Ascending aorta (tissue), 2 donors: ENCODE measurements at regions of chr17 and their contacts with region 1.

Region 1: DNA sequence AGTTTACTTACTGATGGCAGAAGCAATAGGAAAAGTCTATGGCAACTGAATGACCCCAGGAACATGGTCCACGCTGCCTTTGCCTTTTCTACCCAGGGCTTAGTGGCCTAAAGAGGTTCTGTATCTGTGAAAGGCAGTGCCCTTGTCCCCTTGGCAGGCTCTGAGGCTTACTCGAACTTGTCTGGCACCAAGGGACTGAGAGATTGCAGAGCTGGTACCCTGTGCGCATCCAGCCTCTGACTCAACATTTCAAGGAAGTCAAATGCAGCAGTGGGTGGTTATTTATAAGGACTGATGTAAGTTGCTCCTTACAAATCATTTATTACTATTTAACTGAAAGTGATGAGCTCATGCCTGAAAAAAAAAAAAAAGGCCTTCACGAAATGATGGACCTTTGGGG is 299.9 kb upstream of the MYOCD start:
- DNase-seq: peak; percentile 72 to 93
- H3K4me3 ChIP-seq: no peak overlapping the region
- H3K27ac ChIP-seq: peak overlapping the region; percentile 87 to 94
- H3K4me1 ChIP-seq: peaks cover 0 to 33% of the 10 kb centered on the region in 2 donors
- H3K27me3 ChIP-seq: no peaks in the 10 kb centered on the region
- CTCF ChIP-seq: no peak

Region 2: DNA sequence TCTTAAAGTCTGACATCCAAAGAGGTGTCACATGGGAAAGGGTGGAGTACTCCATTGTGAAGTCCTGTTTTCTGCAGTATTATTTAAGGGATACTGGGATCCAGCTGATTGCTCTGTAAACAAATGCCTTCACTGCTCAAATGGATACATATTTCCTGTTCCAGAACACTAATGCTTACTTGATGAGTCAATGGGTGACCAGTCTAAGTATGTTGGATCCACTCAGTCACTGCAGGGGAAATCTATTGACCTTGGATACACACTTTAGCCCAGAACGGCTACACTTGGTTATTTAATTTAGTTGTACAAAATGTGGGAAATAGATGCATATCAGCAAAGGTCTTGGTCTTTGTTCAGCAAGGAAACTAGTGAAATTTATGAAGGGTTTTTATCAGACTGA is 83.7 kb before region 1 on chr17:
- intact Hi-C with region 1: loop called (anchors 5 kb)
- DNase-seq: no peak
- H3K4me3 ChIP-seq: no peak overlapping the region
- H3K27ac ChIP-seq: peak overlapping the region; percentile 76 to 77
- H3K4me1 ChIP-seq: peaks cover 0 to 15% of the 10 kb centered on the region in 2 donors
- H3K27me3 ChIP-seq: no peaks in the 10 kb centered on the region
- CTCF ChIP-seq: no peak

Region 3: GRCh38 chr17:12318571-12319266 is 47.1 kb before region 1 on chr17:
- intact Hi-C with region 1: loop called (anchors 1 kb)
- DNase-seq: peak in 1 of 2 donors; percentile 86
- H3K4me3 ChIP-seq: peak overlapping the region in 1 of 2 donors; percentile 18
- H3K27ac ChIP-seq: peak overlapping the region; percentile 89 to 90
- H3K4me1 ChIP-seq: peaks cover 0 to 22% of the 10 kb centered on the region in 2 donors
- H3K27me3 ChIP-seq: no peaks in the 10 kb centered on the region
- CTCF ChIP-seq: no peak

Region 4: GRCh38 chr17:12395733-12396354 is 30.0 kb after region 1 on chr17:
- intact Hi-C with region 1: no loop called
- DNase-seq: no peak
- H3K4me3 ChIP-seq: no peak overlapping the region
- H3K27ac ChIP-seq: no peak overlapping the region
- H3K4me1 ChIP-seq: peaks cover 0 to 12% of the 10 kb centered on the region in 2 donors
- H3K27me3 ChIP-seq: no peaks in the 10 kb centered on the region
- CTCF ChIP-seq: peak in 2 of 3 experiments; percentile 24 to 26

Region 5: GRCh38 chr17:12463102-12463501 is 97.3 kb after region 1 on chr17:
- intact Hi-C with region 1: loop called (anchors 2 kb)
- DNase-seq: peak in 1 of 2 donors; percentile 83
- H3K4me3 ChIP-seq: no peak overlapping the region
- H3K27ac ChIP-seq: peak overlapping the region; percentile 64 to 74
- H3K4me1 ChIP-seq: peaks cover 0 to 8% of the 10 kb centered on the region in 2 donors
- H3K27me3 ChIP-seq: no peaks in the 10 kb centered on the region
- CTCF ChIP-seq: no peak

Region 6: GRCh38 chr17:12627177-12627629 is 261.4 kb after region 1 on chr17:
- intact Hi-C with region 1: loop called (anchors 5 kb)
- DNase-seq: peak; percentile 80 to 96
- H3K4me3 ChIP-seq: peak overlapping the region in 1 of 2 donors; percentile 32
- H3K27ac ChIP-seq: peak overlapping the region; percentile 95 to 96
- H3K4me1 ChIP-seq: peaks cover 15 to 45% of the 10 kb centered on the region in 2 donors
- H3K27me3 ChIP-seq: no peaks in the 10 kb centered on the region
- CTCF ChIP-seq: no peak

Region 7: GRCh38 chr17:12691182-12691581 is 325.4 kb after region 1 on chr17:
- intact Hi-C with region 1: loop called (anchors 5 kb)
- DNase-seq: peak; percentile 48 to 94
- H3K4me3 ChIP-seq: no peak overlapping the region
- H3K27ac ChIP-seq: peak overlapping the region; percentile 93
- H3K4me1 ChIP-seq: peaks cover 10 to 41% of the 10 kb centered on the region in 2 donors
- H3K27me3 ChIP-seq: no peaks in the 10 kb centered on the region
- CTCF ChIP-seq: no peak